Activated naive CD4-positive, alpha-beta T cell treated with anti-CD3 and anti-CD28 coated beads for 36 hours (primary cell): ENCODE measurements at regions of chr7 and their contacts with region 1.

Region 1: GRCh38 chr7:106071356-106071998 is 40.6 kb downstream of the SYPL1 start:
- DNase-seq: peak; percentile 78
- H3K4me3 Mint-ChIP-seq: peak overlapping the region; percentile 65
- H3K27ac Mint-ChIP-seq: peak overlapping the region; percentile 91
- H3K4me1 Mint-ChIP-seq: peaks cover 34% of the 10 kb centered on the region
- H3K27me3 Mint-ChIP-seq: no peaks in the 10 kb centered on the region

Region 2: DNA sequence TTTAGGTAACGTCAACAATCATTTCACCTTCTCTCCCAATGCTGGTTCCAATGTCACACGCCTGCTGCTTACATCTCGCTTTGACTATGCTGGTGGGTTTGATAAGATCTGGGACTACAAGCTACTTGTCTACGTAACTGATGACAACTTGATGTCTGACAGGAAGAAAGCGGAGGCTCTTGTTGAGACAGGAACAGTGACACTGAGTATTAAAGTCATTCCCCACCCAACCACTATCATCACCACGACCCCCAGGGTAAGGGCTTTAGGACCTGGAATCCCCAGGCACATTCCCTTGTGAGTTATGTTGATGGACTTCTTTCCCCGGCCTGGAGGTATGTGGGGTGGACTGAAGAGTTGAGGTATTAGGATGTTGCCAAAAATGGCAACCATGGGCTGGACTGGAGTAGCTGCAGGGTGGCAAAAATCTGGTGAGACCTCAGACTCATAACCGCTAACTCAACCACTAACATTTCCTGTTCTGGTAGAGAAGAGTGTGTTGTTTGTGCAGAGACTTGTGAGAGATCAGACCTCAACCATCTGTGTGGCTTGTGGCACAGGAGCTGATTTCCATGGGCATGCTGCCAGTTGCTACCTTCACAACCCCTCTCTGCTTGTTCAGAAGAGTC is 49.2 kb before region 1 on chr7:
- CTCF ChIA-PET with region 1: no interaction called
- intact Hi-C with region 1: loop called (anchors 1 kb)
- DNase-seq: peak; percentile 82
- H3K4me3 Mint-ChIP-seq: peak overlapping the region; percentile 19
- H3K27ac Mint-ChIP-seq: peak overlapping the region; percentile 62
- H3K4me1 Mint-ChIP-seq: peaks cover 71% of the 10 kb centered on the region
- H3K27me3 Mint-ChIP-seq: no peaks in the 10 kb centered on the region

Region 3: GRCh38 chr7:106089647-106090046 is 18.2 kb after region 1 on chr7:
- CTCF ChIA-PET with region 1: no interaction called
- intact Hi-C with region 1: loop called (anchors 2 kb)
- DNase-seq: no peak
- H3K4me3 Mint-ChIP-seq: no peak overlapping the region
- H3K27ac Mint-ChIP-seq: no peak overlapping the region
- H3K4me1 Mint-ChIP-seq: peaks cover 9% of the 10 kb centered on the region
- H3K27me3 Mint-ChIP-seq: no peaks in the 10 kb centered on the region

Region 4: DNA sequence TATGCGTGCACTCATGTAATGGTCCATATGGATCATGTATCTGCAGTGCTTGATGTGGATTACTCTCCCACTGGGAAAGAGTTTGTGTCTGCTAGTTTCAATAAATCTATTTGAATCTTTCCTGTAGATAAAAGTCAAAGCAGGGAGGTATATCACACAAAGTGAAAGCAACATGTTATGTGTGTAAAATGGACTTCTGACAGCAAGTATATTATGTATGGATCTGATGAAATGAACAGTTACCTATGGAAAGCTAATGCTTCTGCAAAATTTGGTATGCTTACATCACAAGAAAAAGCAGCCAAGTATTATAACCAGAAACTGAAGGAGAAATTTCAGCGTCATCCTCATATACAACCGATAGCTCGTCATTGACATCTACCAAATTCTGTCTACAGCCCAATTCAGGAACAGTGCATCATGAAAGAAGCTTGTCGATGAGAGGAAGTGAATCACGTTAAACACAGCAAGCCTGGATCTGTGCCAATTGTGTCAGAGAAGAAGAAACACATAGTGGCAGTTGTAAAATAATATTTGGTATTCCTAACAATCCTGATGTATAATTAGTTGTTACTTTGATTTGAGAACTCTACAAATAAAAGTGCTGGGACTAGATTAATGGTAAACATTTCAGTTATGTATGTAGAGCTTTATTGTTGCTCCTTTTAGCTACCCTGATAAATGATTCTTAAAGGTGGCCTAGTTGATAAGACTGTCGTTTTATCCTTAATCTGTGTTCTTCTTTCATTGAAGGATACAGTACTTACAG is 54.9 kb after region 1 on chr7:
- CTCF ChIA-PET with region 1: no interaction called
- intact Hi-C with region 1: loop called (anchors 1 kb)
- DNase-seq: peak; percentile 85
- H3K4me3 Mint-ChIP-seq: peak overlapping the region; percentile 68
- H3K27ac Mint-ChIP-seq: peak overlapping the region; percentile 20
- H3K4me1 Mint-ChIP-seq: peaks cover 18% of the 10 kb centered on the region
- H3K27me3 Mint-ChIP-seq: no peaks in the 10 kb centered on the region

Region 5: GRCh38 chr7:106166655-106167342 is 95.3 kb after region 1 on chr7:
- CTCF ChIA-PET with region 1: interaction called, 11 read pairs
- intact Hi-C with region 1: no loop called
- DNase-seq: peak; percentile 63
- H3K4me3 Mint-ChIP-seq: no peak overlapping the region
- H3K27ac Mint-ChIP-seq: no peak overlapping the region
- H3K4me1 Mint-ChIP-seq: no peaks in the 10 kb centered on the region
- H3K27me3 Mint-ChIP-seq: peaks cover 3% of the 10 kb centered on the region

Region 6: DNA sequence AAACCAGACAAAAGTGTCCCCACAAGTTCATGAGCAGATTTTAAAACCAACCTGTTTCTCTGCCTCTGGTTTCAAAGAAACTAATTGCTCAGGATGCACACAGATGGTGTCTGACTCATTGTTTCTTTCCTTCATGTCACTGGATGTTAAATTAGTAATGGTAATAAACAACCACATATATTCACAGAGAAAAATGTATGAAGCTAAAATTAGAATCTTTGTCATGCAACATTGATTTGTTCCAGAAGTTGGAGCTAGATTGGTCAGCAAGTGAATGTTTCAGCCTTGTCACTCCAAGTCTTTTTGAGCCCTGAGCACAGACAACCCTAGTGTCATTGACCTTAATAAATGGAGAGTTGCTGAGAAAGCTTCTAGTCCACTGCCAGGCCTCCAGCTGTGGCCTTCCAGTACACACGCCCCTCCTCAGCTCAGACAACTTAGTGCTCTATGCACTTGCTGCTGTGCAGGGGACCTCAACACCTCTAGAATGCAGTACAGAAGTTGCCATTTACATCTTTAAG is 413.6 kb after region 1 on chr7:
- CTCF ChIA-PET with region 1: no interaction called
- intact Hi-C with region 1: loop called (anchors 10 kb)
- DNase-seq: peak; percentile 26
- H3K4me3 Mint-ChIP-seq: no peak overlapping the region
- H3K27ac Mint-ChIP-seq: peak overlapping the region; percentile 81
- H3K4me1 Mint-ChIP-seq: peaks cover 57% of the 10 kb centered on the region
- H3K27me3 Mint-ChIP-seq: peaks cover 23% of the 10 kb centered on the region

Region 7: DNA sequence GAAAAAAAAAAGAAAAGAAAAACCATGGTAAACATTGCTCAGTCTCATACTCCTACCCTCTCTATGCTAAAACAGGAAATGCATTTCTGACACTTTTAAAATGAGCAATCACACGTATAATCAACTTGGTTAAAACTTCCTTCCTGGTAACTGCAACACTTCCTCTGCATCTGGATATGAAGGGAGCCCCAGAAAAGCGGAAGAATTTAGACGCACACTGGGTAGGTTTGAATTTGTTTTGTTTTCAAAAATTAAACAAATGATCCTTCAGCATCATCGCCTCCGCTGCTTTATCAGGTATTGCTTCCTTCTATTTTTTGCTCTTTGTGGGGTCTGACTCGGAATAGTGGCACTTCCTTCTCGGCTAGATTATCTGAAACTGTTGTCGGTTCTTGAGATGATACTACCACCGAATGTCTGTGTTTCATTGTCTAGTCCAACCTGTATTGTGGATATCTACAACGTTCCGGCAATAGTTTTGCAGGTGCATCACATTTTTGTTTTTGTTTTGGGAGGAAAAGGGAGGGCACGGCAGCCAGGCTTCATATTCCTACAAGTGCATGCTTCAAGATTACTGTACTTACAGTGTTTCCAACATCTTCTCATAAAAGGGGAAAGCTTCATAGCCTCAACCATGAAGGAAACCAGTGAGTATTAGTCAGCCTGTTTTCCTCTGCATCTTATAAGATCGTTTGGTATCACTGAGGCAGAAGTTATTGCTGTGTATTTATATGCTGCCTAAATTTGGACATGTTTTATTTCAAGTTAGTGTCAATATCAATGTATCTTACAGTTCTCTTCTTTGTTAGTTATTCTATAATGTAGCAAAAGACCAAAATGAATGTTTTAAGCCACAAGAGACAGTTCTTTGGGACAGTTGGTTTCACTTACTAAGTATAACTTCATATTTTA is 793.9 kb after region 1 on chr7 and contains the start of gene PIK3CG:
- CTCF ChIA-PET with region 1: no interaction called
- intact Hi-C with region 1: loop called (anchors 5 kb)
- DNase-seq: no peak
- H3K4me3 Mint-ChIP-seq: peak within 1 kb of the TSS; percentile 79
- H3K27ac Mint-ChIP-seq: peak within 1 kb of the TSS; percentile 65
- H3K4me1 Mint-ChIP-seq: peaks cover 77% of the 10 kb centered on the region
- H3K27me3 Mint-ChIP-seq: no peaks in the 10 kb centered on the region
- total RNA-seq, gene PIK3CG: 3.6 to 3.8 TPM

Region 8: DNA sequence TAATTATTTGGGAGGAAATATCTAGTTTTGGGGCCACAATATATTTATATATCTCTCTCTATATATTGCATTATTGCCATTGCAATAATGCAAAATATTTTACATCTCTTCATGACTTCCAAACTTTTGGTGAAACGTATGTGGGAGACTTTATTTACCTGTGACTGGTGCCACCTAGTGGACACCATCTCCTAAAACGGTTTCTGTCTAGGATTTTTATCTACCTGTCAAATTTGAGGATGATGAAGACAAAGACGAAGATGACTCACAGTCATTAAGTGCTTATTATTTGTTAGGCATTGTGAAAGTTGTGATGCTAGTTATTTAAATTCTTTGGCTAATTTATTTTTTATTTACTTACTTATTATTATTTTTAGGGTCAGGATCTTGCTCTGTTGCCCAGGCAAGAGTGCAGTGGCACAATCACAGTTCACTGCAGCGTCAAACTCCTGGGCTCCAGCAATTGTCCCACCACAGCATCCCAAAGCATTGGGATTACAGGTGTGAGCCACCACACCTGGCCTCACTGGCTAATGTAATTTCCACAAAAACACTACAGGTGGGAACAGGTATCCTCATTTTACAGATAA is 1653.8 kb after region 1 on chr7:
- CTCF ChIA-PET with region 1: no interaction called
- intact Hi-C with region 1: no loop called
- DNase-seq: peak; percentile 75
- H3K4me3 Mint-ChIP-seq: no peak overlapping the region
- H3K27ac Mint-ChIP-seq: no peak overlapping the region
- H3K4me1 Mint-ChIP-seq: no peaks in the 10 kb centered on the region
- H3K27me3 Mint-ChIP-seq: peaks cover 26% of the 10 kb centered on the region